BJ (cell line): ENCODE measurements at regions of chr3 and their contacts with region 1.

Region 1: DNA sequence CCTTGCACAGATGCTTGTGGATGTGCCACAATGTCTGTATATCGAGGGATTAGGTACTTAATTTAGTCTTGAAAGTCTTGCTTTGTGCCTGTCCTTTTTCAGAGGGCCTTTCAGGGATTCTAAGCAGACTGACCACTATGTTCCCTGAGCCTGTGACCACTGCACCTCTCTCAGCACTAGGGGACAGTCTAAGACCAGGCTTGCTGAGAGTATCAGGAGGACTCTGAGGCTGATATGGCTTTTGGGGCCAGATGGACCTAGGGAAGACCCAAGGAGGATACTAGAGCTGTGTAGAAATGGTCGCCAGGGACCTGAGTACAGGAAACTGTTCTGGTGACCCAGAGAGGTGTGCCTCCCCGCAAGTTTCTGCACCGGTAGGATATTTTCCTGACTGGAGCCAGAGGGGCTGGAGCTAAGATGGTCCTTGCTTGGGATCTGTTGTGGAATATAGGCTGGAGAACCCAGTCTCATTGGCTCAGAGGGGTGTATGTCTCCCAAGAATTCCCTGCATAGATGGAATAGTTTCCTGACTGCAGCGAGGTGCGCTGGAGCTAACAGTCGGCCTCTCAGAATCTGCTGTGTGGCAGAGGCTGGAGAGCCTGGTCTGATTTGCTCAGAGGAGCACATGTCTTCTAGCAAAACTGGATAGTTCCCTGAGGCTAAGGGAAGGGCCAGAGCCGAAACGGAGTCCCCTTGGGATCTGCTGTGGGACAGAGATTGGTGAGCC is 213.2 kb upstream of the DCBLD2 start:
- DNase-seq: no peak
- H3K4me3 ChIP-seq: no peak overlapping the region
- H3K27me3 ChIP-seq: no peaks in the 10 kb centered on the region
- CTCF ChIP-seq: peak; percentile 89

Region 2: DNA sequence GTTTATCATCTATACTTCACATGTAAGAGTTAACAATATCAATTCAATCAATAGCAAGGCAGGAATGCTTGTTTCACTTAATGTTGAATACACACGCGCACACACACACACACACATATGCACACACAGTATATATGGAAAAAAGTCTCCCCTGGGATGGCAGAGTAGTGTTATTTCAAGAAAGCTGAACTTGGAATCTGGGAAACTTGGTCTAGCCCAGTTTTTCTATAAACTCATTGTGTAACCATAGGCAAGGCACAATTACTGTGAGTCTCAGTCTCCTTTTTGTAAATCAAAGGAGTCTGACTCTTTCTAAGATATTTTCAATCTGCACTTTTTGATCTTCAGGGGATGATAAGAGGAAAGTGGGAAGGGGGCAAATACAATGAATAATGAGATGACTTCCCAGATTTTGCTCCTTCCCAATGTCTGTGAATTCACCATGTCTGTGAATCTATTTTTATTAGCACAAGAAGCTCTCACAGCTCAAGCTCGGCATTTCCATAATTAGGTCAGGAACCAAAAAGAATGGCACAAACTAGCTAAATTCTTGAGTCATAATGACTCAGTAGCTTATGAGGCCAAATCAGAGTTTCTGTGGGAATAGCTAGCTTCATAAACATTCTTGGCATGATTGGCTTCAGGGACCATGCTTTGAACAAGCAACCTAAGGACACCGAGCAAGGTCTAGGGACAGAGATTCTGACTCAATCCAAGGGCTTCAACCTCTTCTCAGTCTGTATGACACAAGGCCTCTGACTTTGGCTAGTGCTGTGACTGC is 14.2 kb after region 1 on chr3:
- CTCF ChIA-PET with region 1: interaction called, 12 read pairs
- POLR2A ChIA-PET with region 1: interaction called, 3 read pairs
- DNase-seq: peak; percentile 98
- H3K4me3 ChIP-seq: no peak overlapping the region
- H3K27me3 ChIP-seq: no peaks in the 10 kb centered on the region
- CTCF ChIP-seq: no peak